ENCODE measurements at regions of chr2 and their contacts with region 1.

Region 1: DNA sequence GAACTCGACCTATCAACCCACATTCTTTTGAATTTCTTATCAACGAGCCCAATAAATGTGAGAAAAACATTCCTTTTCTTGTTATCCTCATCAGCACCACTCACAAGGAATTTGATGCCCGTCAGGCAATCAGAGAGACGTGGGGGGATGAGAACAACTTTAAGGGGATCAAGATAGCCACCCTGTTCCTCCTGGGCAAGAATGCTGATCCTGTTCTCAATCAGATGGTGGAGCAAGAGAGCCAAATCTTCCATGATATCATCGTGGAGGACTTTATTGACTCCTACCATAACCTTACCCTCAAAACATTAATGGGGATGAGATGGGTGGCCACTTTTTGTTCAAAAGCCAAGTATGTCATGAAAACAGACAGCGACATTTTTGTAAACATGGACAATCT is 378.2 kb downstream of the STK39 start:
- DNase-seq: no peak
- ATAC-seq: no peak
- H3K4me3 ChIP-seq: no peak overlapping the region
- H3K27ac ChIP-seq: no peak overlapping the region
- H3K4me1 ChIP-seq: no peaks in the 10 kb centered on the region
- H3K27me3 ChIP-seq: no peaks in the 10 kb centered on the region
- CTCF ChIP-seq: peak; percentile 9; the same call in 1 of the 2 replicates

Region 2: GRCh38 chr2:167857416-167857815 is 11.8 kb before region 1 on chr2:
- CTCF ChIA-PET with region 1: no interaction called
- POLR2A ChIA-PET with region 1: no interaction called
- in situ Hi-C with region 1: no loop called
- intact Hi-C with region 1: no loop called
- DNase-seq: no peak
- ATAC-seq: no peak
- H3K4me3 ChIP-seq: no peak overlapping the region
- H3K27ac ChIP-seq: no peak overlapping the region
- H3K4me1 ChIP-seq: no peaks in the 10 kb centered on the region
- H3K27me3 ChIP-seq: no peaks in the 10 kb centered on the region; the same call in 1 of the 2 replicates
- CTCF ChIP-seq: no peak

Region 3: DNA sequence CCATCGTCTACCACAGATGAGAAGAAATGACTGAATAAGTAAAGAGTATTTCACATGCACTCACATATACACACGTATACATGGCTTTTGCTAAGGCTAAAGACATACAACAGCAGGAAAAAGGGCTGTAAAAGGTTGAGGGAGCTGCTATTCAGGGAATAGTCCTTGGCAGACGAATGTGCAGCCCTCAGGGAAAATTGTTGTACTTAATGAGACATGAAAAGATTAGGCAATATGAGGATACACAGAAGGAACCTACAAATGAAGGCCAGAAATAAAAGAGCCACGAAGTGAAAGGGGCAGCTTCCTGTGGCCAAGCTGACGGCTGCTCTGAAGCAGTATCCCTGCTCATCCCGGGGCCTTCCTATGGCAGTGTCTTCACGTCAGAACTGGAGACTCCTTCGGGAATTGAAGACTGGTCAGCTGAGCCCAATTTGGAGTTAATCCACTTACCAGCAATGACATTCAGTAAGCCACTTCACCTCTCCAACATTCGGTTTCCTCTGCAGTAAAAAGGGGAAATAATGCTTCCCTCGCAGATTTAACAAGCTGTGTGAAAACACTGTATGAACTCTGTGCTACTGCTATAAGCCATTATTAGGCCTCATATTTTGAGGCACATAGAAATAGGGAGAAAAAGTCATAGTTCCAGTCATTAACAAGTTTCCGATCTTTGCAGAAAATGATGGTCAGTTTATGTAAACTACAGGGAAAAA is 156.4 kb after region 1 on chr2:
- CTCF ChIA-PET with region 1: no interaction called
- POLR2A ChIA-PET with region 1: no interaction called
- in situ Hi-C with region 1: no loop called
- intact Hi-C with region 1: no loop called
- DNase-seq: no peak
- ATAC-seq: no peak
- H3K4me3 ChIP-seq: no peak overlapping the region
- H3K27ac ChIP-seq: no peak overlapping the region
- H3K4me1 ChIP-seq: no peaks in the 10 kb centered on the region
- H3K27me3 ChIP-seq: no peaks in the 10 kb centered on the region
- CTCF ChIP-seq: no peak

Region 4: DNA sequence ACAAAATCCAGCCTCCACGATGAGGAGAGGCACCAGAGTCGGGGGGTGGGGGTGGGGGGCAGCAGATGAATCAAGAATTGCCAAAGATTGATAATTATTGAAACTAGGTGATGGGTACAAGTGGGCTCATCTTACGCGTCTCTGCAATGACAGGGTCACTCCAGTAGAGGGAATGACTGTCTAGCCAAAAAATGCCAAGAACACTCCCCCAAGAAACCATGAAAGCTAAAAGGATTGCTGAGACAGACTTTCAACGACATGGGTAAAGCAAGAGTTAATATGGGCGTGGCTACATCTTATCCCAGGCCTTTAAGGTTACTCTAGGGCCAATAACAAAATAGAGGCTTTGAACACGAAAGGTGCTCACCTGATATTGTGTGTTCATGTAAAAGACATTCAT is 291.7 kb after region 1 on chr2:
- CTCF ChIA-PET with region 1: interaction called, 13 read pairs
- POLR2A ChIA-PET with region 1: no interaction called
- in situ Hi-C with region 1: no loop called
- intact Hi-C with region 1: no loop called
- DNase-seq: peak; percentile 10
- ATAC-seq: no peak
- H3K4me3 ChIP-seq: no peak overlapping the region
- H3K27ac ChIP-seq: no peak overlapping the region
- H3K4me1 ChIP-seq: no peaks in the 10 kb centered on the region
- H3K27me3 ChIP-seq: no peaks in the 10 kb centered on the region
- CTCF ChIP-seq: peak; percentile 36